MCF 10A (cell line): ENCODE measurements at regions of chr10 and their contacts with region 1.

Region 1: DNA sequence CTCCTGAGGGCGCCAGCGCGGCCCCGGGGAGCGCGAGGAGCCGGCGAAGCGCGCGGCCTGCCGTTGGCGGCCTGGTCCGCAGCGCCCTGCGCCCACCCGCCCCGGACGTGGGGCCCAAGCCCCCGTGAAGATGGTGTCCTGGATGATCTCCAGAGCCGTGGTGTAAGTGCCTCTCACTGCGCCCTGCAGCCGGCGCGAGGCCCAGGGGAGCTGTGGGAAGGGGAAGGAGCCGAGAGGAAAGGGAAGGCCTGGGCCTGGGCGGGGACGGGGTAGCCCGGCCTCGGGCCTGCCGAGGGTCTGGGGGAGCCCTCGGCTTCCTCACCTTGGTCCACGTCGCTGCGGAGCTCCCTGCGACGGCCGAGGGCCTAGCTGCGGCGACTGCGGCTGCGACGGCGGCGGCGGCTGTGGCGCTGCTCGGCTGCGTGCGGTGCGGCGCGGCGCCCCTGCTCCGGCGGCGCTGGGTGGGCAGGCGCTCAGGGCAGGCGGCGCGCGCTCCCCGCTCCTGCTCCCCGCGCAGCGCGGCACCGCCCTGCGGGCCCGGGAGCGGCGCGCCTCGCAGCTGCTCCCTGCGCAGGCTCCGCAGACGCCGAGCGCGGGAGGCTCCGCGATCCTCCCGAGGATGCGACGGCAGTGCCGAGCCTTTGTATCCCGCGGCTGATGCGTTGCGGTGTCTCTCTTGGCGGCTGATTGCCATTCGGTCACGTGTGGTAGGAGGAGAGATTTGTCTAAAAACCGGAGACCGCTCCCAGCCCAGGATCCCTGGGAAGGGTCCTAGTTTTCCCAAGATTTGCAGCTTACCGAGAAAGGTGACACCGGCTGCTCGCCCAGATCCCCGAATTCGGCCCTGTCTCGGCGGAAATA is 445 bp downstream of the REEP3 start:
- DNase-seq: peak; percentile 65
- H3K4me3 Mint-ChIP-seq: peak overlapping the region; percentile 86
- H3K27ac Mint-ChIP-seq: peak overlapping the region; percentile 83
- H3K4me1 Mint-ChIP-seq: peaks cover 46% of the 10 kb centered on the region
- H3K27me3 Mint-ChIP-seq: no peaks in the 10 kb centered on the region
- CTCF ChIP-seq: no peak

Region 2: DNA sequence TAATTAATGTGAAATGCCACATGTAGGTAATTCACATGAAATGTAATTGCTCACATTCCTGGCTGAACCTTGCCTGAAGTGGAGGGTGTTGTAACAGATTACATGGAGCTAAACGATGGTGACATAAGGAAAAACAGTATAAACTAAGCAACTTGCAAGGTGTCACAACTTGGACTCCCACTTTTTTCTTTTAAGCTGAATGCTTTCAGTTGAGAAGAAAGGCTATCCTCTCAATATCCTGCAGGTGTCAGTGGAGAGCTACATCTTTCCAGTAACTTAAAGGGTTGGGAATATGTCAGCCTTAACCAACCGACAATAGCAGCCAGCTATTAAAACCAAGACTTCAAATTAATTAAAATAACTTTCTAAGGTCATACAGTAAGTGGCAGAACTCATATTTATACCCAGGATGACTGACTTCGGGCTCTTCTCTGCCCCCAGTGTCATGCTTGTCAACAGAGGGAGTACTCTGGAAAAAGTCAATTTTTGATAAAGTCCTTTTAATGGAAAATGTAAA is 354.8 kb before region 1 on chr10:
- CTCF ChIA-PET with region 1: no interaction called
- POLR2A ChIA-PET with region 1: no interaction called
- intact Hi-C with region 1: loop called (anchors 5 kb)
- DNase-seq: peak; percentile 83
- H3K4me3 Mint-ChIP-seq: no peak overlapping the region
- H3K27ac Mint-ChIP-seq: no peak overlapping the region
- H3K4me1 Mint-ChIP-seq: no peaks in the 10 kb centered on the region
- H3K27me3 Mint-ChIP-seq: no peaks in the 10 kb centered on the region
- CTCF ChIP-seq: peak; percentile 68

Region 3: DNA sequence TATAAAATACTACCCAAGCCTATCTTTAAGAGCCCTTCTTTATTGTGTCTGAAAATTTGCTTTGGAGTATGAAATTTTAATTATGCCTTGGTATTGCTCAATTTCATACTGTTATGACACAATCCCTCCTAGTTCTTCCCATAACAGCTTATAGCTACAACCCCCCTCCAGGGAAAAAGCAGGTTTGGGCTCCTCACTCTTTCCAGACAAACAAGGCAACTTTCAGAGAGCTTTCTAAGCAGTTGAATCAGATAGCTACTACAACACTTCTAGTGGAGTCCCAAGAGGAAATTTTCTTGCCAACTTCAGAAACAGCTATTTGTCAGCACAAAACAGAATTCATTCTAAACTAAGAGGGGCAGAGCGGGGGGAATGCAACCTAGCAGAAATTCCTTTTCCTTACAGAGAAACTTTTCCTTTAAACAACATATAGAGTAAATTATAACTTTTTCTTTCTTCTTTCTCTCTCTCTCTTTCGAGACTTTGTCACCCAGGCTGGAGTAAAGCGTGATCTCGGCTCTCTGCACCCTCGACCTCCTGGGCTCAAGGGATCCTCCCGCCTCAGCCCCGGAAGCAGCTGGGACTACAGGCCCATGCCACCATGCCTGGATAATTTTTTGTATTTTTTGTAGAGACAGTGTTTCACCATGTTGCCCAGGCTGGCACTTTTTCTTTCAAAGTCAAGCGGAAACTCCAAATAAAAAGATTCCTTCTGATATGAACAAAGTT is 29.9 kb before region 1 on chr10:
- CTCF ChIA-PET with region 1: interaction called, 4 read pairs
- POLR2A ChIA-PET with region 1: interaction called, 89 read pairs
- intact Hi-C with region 1: no loop called
- DNase-seq: peak; percentile 91
- H3K4me3 Mint-ChIP-seq: peak overlapping the region; percentile 38
- H3K27ac Mint-ChIP-seq: peak overlapping the region; percentile 72
- H3K4me1 Mint-ChIP-seq: peaks cover 17% of the 10 kb centered on the region
- H3K27me3 Mint-ChIP-seq: no peaks in the 10 kb centered on the region
- CTCF ChIP-seq: no peak

Region 4: DNA sequence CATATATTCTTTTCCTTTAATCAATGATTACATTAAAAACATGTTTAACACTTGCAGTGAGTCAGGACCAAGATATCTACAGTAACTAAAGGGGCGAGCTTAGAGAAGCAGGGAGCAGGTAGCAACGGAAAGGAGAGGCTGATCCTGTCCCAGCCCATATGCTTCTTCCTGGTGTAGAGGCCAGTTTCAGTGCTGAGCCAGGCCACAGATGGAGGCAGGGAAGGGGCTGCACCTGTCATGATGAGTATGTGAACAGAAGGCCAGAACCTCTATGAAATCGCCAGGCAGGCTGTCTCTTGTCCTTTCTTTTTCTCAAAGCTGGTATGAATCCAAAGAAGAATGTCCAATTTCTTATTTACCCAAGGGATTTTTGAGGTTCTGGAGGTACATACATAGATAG is 15.9 kb after region 1 on chr10:
- CTCF ChIA-PET with region 1: interaction called, 18 read pairs
- POLR2A ChIA-PET with region 1: interaction called, 27 read pairs
- intact Hi-C with region 1: no loop called
- DNase-seq: no peak
- H3K4me3 Mint-ChIP-seq: no peak overlapping the region
- H3K27ac Mint-ChIP-seq: peak overlapping the region; percentile 81
- H3K4me1 Mint-ChIP-seq: peaks cover 16% of the 10 kb centered on the region
- H3K27me3 Mint-ChIP-seq: no peaks in the 10 kb centered on the region
- CTCF ChIP-seq: no peak

Region 5: DNA sequence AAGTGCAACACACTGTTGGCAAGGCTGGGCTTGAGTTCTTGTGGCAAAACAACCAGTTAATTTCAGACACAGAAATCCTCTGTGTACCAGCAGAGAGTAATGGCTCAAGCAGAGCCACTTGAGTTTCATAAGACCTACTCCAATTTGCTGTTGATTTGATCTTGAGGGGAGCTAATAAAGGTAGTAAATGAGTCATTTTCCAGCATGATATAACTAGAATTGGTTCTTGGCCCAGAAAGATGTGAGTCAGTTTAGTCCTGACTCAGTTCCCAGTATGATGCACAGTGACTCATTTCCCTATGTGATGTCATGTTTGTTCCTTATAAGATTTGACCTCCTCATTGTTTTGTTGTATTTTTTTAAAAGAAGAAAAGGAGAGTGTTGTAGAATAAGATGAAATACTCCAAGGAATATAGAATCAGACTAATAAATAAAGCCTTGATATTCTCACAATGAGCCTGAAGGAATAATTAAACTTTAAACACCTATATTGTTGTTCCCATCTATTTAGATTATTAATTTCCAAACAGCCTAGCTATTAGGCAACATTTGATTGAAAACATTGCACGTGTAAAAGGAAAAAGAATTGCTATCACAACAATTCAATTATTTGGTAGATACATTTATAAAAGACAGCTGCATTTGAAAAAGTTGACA is 185.7 kb after region 1 on chr10:
- CTCF ChIA-PET with region 1: interaction called, 3 read pairs
- POLR2A ChIA-PET with region 1: interaction called, 9 read pairs
- intact Hi-C with region 1: loop called (anchors 5 kb)
- DNase-seq: peak; percentile 98
- H3K4me3 Mint-ChIP-seq: no peak overlapping the region
- H3K27ac Mint-ChIP-seq: peak overlapping the region; percentile 61
- H3K4me1 Mint-ChIP-seq: peaks cover 42% of the 10 kb centered on the region
- H3K27me3 Mint-ChIP-seq: no peaks in the 10 kb centered on the region
- CTCF ChIP-seq: no peak